ENCODE measurements at regions of chr4 and their contacts with region 1.

Region 1: DNA sequence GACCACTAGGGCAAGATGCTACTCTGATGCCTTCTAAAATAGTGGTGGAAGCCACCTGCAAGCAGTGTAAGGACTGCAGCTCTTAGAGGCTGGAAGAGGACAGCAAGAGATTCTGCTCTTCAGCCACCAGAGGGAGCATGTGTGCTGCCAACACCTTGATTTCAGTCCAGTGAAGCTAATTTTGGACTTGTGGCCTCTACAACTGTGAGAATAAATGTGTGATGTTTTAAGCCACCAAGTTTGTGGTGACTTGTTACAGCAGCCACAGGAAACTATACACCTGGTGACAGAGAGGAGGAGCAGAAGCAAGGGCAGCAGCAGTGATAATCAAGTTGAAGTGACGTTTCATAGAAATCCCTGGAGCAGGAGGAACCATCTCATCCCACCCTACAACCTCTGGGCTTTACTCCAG is 55.9 kb downstream of the FGFBP1 start:
- DNase-seq: peak; percentile 87
- H3K4me3 ChIP-seq: no peak overlapping the region
- H3K27ac ChIP-seq: no peak overlapping the region
- H3K4me1 ChIP-seq: peaks cover 3% of the 10 kb centered on the region
- CTCF ChIP-seq: peak; percentile 94

Region 2: GRCh38 chr4:16001484-16001858 is 118.8 kb after region 1 on chr4:
- CTCF ChIA-PET with region 1: no interaction called
- POLR2A ChIA-PET with region 1: no interaction called
- intact Hi-C with region 1: loop called (anchors 2 kb)
- DNase-seq: peak; percentile 75
- H3K4me3 ChIP-seq: no peak overlapping the region
- H3K27ac ChIP-seq: no peak overlapping the region
- H3K4me1 ChIP-seq: no peaks in the 10 kb centered on the region
- CTCF ChIP-seq: peak; percentile 92

Region 3: GRCh38 chr4:16192631-16193518 is 310.2 kb after region 1 on chr4:
- CTCF ChIA-PET with region 1: no interaction called
- POLR2A ChIA-PET with region 1: no interaction called
- intact Hi-C with region 1: no loop called
- DNase-seq: no peak
- H3K4me3 ChIP-seq: no peak overlapping the region
- H3K27ac ChIP-seq: no peak overlapping the region
- H3K4me1 ChIP-seq: no peaks in the 10 kb centered on the region
- CTCF ChIP-seq: no peak

Measured in OCI-LY7 (cell line).